Endothelial cell of umbilical vein (primary cell): ENCODE measurements at regions of chr13 and their contacts with region 1.

Region 1: DNA sequence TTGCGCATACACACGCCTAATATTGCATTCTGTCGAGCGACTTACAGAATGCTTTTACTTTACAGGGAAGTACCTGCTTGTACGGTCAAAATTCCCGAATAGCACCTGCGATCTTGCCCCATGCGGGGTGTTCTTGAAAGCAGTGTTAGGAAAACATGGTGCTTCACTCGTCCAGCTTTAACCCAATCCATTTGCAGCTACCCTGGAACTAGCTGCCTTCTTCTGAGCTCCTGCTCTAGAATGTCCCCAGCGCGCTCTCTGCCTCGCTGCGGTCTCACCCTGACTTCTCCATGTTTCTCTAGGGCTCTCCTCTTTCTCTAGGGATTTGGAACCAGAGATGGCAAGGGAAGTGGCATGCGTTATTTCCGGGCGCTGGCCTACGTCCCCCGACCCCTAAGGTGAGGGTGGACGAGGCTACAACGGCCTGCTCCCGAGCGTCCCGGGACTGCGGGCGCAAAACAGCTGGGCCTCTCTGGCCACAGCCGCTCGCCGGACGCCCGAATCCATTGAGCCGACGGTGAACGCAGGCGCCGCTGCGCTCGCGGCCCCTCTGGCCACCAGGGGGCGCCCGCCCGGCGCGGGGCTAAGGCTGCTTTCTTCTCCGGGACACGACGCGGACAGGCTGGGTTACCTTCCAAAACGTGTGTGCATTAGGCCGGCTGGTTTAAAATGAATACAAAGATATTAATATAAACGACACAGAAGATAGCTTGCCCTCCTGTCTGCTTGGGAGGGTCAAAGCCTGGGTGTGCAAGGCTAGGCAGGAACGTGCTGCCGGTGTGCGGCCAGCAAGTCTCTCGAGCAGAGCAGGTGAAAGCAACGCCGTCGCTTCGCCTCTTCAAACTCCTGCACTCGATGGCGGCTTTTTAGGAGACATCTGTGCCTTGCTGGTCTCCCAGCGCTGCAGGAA is 1.8 kb upstream of the SPRY2 start:
- DNase-seq: peak; percentile 83
- H3K4me3 ChIP-seq: peak overlapping the region; percentile 30 to 77 (median 75)
- H3K27ac ChIP-seq: peak overlapping the region; percentile 82
- H3K4me1 ChIP-seq: peaks cover 17% of the 10 kb centered on the region
- H3K27me3 ChIP-seq: no peaks in the 10 kb centered on the region
- CTCF ChIP-seq: peak; percentile 97 to 98
- POLR2A ChIP-seq: no peak

Region 2: DNA sequence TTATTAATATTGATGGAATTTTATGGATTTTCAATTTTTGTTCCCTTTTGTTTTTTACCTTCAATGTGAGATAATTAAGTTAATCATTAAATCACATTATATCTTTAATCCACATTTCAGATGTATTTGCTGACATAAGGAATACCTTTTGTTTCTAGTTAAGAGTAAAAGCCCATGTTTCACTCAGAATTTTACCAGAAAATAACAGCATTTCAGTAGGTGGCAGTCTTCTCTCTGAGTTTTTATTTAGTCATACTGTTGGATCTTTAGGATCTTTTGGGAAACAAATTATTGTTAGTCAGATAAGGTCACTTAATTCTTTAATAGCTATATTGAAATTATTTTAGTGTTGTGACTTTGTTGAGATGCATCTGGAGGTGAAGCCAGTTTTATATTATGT is 793.8 kb before region 1 on chr13:
- CTCF ChIA-PET with region 1: interaction called, 4 read pairs
- POLR2A ChIA-PET with region 1: no interaction called
- dilution Hi-C with region 1: no loop called
- intact Hi-C with region 1: loop called (anchors 5 kb)
- DNase-seq: peak; percentile 50
- H3K4me3 ChIP-seq: no peak overlapping the region
- H3K27ac ChIP-seq: no peak overlapping the region
- H3K4me1 ChIP-seq: no peaks in the 10 kb centered on the region
- H3K27me3 ChIP-seq: no peaks in the 10 kb centered on the region
- CTCF ChIP-seq: no peak
- POLR2A ChIP-seq: no peak

Region 3: GRCh38 chr13:79775830-79776229 is 566.9 kb before region 1 on chr13:
- CTCF ChIA-PET with region 1: interaction called, 11 read pairs
- POLR2A ChIA-PET with region 1: interaction called, 5 read pairs
- dilution Hi-C with region 1: no loop called
- intact Hi-C with region 1: loop called (anchors 1 kb)
- DNase-seq: peak; percentile 87
- H3K4me3 ChIP-seq: no peak overlapping the region
- H3K27ac ChIP-seq: no peak overlapping the region
- H3K4me1 ChIP-seq: peaks cover 4% of the 10 kb centered on the region
- H3K27me3 ChIP-seq: no peaks in the 10 kb centered on the region
- CTCF ChIP-seq: peak; percentile 65 to 67
- POLR2A ChIP-seq: no peak

Region 4: GRCh38 chr13:80037505-80037888 is 305.2 kb before region 1 on chr13:
- CTCF ChIA-PET with region 1: interaction called, 9 read pairs
- POLR2A ChIA-PET with region 1: interaction called, 4 read pairs
- dilution Hi-C with region 1: loop called (anchors 25 kb)
- intact Hi-C with region 1: loop called (anchors 2 kb)
- DNase-seq: peak; percentile 77
- H3K4me3 ChIP-seq: no peak overlapping the region
- H3K27ac ChIP-seq: peak overlapping the region; percentile 77
- H3K4me1 ChIP-seq: peaks cover 36% of the 10 kb centered on the region
- H3K27me3 ChIP-seq: no peaks in the 10 kb centered on the region
- CTCF ChIP-seq: no peak
- POLR2A ChIP-seq: no peak

Region 5: GRCh38 chr13:80235166-80235966 is 107.4 kb before region 1 on chr13:
- CTCF ChIA-PET with region 1: interaction called, 7 read pairs
- POLR2A ChIA-PET with region 1: no interaction called
- dilution Hi-C with region 1: no loop called
- intact Hi-C with region 1: loop called (anchors 1 kb)
- DNase-seq: peak; percentile 79
- H3K4me3 ChIP-seq: peak overlapping the region in 1 of 3 experiments; percentile 41
- H3K27ac ChIP-seq: peak overlapping the region; percentile 89
- H3K4me1 ChIP-seq: peaks cover 18% of the 10 kb centered on the region
- H3K27me3 ChIP-seq: no peaks in the 10 kb centered on the region
- CTCF ChIP-seq: no peak
- POLR2A ChIP-seq: no peak

Region 6: DNA sequence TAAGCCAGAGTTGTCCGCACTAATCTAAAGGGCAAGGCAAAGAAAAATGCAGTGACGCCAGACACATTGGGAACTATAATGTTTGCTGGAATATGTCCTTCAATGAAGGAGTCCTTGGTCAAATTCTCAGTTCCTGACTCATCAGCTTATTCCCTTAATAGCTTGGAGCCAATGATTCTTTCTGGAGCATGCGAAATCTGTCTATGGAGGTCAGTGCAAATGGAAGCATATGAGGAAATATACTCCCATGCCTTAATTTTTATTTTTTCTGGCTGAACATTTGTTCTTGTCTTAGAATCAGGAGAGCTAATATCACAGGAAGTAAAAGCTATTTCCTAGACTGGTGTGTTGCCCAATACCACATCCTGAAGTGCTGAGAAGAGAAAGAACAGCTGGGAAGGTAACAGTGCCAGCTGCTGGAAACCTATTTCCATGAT is 288.0 kb after region 1 on chr13:
- CTCF ChIA-PET with region 1: interaction called, 18 read pairs
- POLR2A ChIA-PET with region 1: no interaction called
- dilution Hi-C with region 1: no loop called
- intact Hi-C with region 1: loop called (anchors 1 kb)
- DNase-seq: peak; percentile 85
- H3K4me3 ChIP-seq: no peak overlapping the region
- H3K27ac ChIP-seq: peak overlapping the region; percentile 41
- H3K4me1 ChIP-seq: peaks cover 17% of the 10 kb centered on the region
- H3K27me3 ChIP-seq: no peaks in the 10 kb centered on the region
- CTCF ChIP-seq: no peak
- POLR2A ChIP-seq: no peak

Region 7: DNA sequence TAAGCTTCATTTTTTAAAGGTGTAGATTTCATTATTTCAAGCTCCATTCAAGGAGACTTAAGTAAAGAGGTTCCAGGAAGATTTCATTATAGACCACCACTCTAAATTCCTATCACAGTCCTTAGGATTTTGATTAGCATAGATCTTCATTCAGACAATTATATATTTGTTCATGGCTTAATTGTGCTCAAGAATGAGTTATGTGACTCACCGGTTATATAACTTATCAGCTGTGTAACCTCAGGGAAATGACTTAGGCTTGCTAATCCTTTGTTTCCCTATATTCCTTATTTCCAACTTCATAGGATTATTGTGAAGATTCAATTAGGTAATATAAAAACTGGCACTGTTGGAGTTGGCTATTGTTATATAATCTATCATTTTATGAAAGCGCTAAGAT is 631.0 kb after region 1 on chr13:
- CTCF ChIA-PET with region 1: interaction called, 41 read pairs
- POLR2A ChIA-PET with region 1: no interaction called
- dilution Hi-C with region 1: no loop called
- intact Hi-C with region 1: loop called (anchors 1 kb)
- DNase-seq: peak; percentile 58
- H3K4me3 ChIP-seq: no peak overlapping the region
- H3K27ac ChIP-seq: peak overlapping the region; percentile 65
- H3K4me1 ChIP-seq: peaks cover 12% of the 10 kb centered on the region
- H3K27me3 ChIP-seq: no peaks in the 10 kb centered on the region
- CTCF ChIP-seq: no peak
- POLR2A ChIP-seq: no peak